ENCODE measurements at regions of chr13 and their contacts with region 1.

Region 1: DNA sequence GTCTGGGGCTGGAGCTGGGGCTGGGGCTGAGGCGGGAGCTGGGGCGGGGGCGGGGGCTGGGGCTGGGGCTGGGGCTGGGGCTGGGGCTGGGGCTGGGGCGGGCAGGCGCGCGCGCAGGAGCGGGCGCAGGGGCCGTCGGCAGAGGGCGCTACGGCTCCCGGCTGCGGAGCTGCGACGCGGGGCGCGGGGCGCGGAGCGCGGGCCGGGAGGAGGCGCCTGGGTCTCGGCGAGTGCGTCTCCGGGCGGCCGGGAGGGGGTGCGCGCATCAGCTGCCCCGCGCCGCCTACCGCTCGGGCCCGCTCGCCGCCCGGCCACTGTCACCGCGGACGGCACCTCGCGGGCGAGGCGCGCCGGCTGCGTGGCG is 422 bp upstream of the MTUS2 start:
- DNase-seq: peak; percentile 15 to 41
- ATAC-seq: peak; percentile 86 to 92
- H3K4me3 ChIP-seq: peak overlapping the region; percentile 54
- H3K27ac ChIP-seq: peak overlapping the region in 1 of 2 experiments; percentile 68; a peak in 2 of 6 replicates
- H3K4me1 ChIP-seq: no peaks in the 10 kb centered on the region
- CTCF ChIP-seq: peak; percentile 57
- EP300 ChIP-seq: no peak
- POLR2A ChIP-seq: no peak
- RAD21 ChIP-seq: peak in 1 of 2 experiments; percentile 36; a peak in 2 of 5 replicates

Region 2: DNA sequence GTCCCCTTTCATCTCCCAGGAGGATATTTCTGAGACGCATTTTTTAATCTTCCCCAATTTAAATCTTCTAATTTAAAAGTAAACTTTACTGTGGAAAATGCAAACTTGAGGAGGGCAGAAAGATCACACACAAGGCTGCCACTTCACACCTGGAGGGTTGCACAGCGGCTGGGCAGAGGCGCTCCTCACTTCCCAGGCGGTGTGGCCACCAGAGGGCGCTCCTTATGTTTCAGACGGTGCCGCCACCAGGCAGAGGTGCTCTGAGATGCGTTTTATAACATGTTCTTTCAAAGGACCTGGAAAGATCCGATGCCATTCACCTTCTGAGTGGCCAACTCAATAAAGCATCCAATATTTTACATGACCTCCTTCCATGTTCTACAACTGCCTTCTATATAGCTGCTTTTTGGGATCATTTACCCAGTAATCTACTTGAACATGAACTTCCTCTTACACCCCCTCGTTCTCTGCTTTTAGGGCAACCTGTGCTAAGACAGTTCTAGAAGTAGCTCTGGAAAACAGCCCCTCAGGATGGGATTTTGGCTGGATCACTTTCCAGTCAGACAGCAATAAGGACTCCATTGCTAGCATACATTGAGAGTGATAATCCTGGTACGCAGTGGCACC is 14.4 kb before region 1 on chr13:
- CTCF ChIA-PET with region 1: interaction called, 15 read pairs
- POLR2A ChIA-PET with region 1: no interaction called
- DNase-seq: peak in 1 of 2 experiments; percentile 44
- ATAC-seq: peak in 1 of 2 experiments; percentile 73; a peak in 3 of 6 replicates
- H3K4me3 ChIP-seq: no peak overlapping the region
- H3K27ac ChIP-seq: no peak overlapping the region
- H3K4me1 ChIP-seq: no peaks in the 10 kb centered on the region
- CTCF ChIP-seq: peak; percentile 38
- EP300 ChIP-seq: no peak
- POLR2A ChIP-seq: no peak
- RAD21 ChIP-seq: peak in 1 of 2 experiments; percentile 23; a peak in 1 of 5 replicates

Region 3: GRCh38 chr13:28837111-28837510 is 17.4 kb after region 1 on chr13:
- CTCF ChIA-PET with region 1: interaction called, 10 read pairs
- POLR2A ChIA-PET with region 1: no interaction called
- DNase-seq: no peak
- ATAC-seq: no peak
- H3K4me3 ChIP-seq: no peak overlapping the region
- H3K27ac ChIP-seq: no peak overlapping the region
- H3K4me1 ChIP-seq: no peaks in the 10 kb centered on the region
- CTCF ChIP-seq: no peak
- EP300 ChIP-seq: no peak
- POLR2A ChIP-seq: no peak
- RAD21 ChIP-seq: no peak

Region 4: DNA sequence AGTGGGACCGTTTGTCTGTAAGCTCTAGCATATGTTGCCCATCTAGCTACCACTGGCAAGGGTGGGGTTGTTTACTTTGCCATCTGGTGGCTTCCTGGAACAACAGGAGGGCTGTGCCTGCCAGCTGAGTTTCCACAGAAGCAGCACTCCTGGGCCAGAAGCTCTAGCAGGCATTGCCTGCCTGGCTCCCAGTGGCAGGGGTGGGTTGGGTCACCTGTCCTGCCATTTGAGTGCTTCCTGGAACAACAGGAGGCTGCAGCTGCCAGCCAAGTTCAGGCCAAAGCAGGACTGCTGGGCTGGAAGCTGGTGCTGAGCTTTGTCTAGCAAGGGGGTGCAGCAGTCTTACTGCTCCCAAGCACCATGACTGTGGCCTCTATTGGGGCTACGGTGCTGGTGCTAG is 240.1 kb after region 1 on chr13:
- CTCF ChIA-PET with region 1: no interaction called
- POLR2A ChIA-PET with region 1: no interaction called
- DNase-seq: no peak
- ATAC-seq: no peak
- H3K4me3 ChIP-seq: no peak overlapping the region
- H3K27ac ChIP-seq: no peak overlapping the region
- H3K4me1 ChIP-seq: no peaks in the 10 kb centered on the region
- CTCF ChIP-seq: no peak
- EP300 ChIP-seq: no peak
- POLR2A ChIP-seq: no peak
- RAD21 ChIP-seq: no peak